Breast epithelium (tissue), 4 donors: ENCODE measurements at regions of chr20 and their contacts with region 1.

Region 1: GRCh38 chr20:50929299-50930138 is 1.7 kb downstream of the ADNP start:
- DNase-seq: peak; percentile 80 to 82
- H3K4me3 ChIP-seq: peak overlapping the region; percentile 79 to 88 (median 86)
- H3K27ac ChIP-seq: peak overlapping the region; percentile 78 to 99
- H3K4me1 ChIP-seq: peaks cover 0 to 8% of the 10 kb centered on the region in 2 donors
- H3K27me3 ChIP-seq: no peaks in the 10 kb centered on the region
- CTCF ChIP-seq: peak; percentile 58 to 83 (median 83)
- POLR2A ChIP-seq: no peak

Region 2: DNA sequence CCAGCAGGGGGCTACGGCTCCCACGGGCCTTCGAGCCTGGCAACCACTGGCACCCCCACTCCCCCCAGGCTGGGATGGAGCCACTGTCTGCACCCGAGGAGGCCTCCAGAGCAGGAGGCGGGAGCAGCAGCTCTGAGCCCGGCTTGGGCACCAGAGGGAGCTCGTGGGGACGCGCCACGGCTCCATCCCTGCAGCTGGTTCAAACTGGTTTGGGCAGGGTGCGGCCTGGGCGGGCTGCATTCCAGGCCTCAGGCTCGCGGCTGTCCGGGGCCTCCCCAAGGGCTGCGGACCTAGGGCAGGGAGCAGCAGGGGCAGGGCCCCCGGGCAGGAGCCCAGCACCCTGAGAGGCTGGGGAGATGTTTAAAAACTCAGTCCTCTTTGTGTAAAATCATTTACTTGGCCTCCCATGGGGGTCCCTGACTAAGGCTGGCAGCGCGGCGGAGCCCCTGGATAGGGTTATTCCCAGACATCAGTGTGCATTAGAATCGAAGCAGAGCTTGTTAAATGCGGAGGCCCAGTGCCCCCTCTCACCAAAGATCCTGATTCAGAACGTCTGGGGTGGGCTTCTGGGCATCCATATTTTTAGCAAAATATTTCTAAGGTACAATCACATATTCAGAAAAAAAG is 138.8 kb before region 1 on chr20:
- intact Hi-C with region 1: loop called (anchors 10 kb)
- DNase-seq: peak; percentile 82 to 93
- H3K4me3 ChIP-seq: peak overlapping the region; percentile 8 to 58 (median 26)
- H3K27ac ChIP-seq: peak overlapping the region; percentile 89 to 92
- H3K4me1 ChIP-seq: peaks cover 0 to 7% of the 10 kb centered on the region in 2 donors
- H3K27me3 ChIP-seq: no peaks in the 10 kb centered on the region
- CTCF ChIP-seq: peak; percentile 69 to 85 (median 69)
- POLR2A ChIP-seq: no peak

Region 3: GRCh38 chr20:51306503-51307358 is 377.2 kb after region 1 on chr20:
- intact Hi-C with region 1: no loop called
- DNase-seq: peak; percentile 46 to 64
- H3K4me3 ChIP-seq: no peak overlapping the region
- H3K27ac ChIP-seq: no peak overlapping the region
- H3K4me1 ChIP-seq: no peaks in the 10 kb centered on the region
- H3K27me3 ChIP-seq: no peaks in the 10 kb centered on the region
- CTCF ChIP-seq: peak; percentile 36 to 86 (median 85)
- POLR2A ChIP-seq: no peak